Activated B cell treated with CpG ODN at 0.5 μM for 24 hours (primary cell): ENCODE measurements at regions of chr5 and their contacts with region 1.

Region 1: DNA sequence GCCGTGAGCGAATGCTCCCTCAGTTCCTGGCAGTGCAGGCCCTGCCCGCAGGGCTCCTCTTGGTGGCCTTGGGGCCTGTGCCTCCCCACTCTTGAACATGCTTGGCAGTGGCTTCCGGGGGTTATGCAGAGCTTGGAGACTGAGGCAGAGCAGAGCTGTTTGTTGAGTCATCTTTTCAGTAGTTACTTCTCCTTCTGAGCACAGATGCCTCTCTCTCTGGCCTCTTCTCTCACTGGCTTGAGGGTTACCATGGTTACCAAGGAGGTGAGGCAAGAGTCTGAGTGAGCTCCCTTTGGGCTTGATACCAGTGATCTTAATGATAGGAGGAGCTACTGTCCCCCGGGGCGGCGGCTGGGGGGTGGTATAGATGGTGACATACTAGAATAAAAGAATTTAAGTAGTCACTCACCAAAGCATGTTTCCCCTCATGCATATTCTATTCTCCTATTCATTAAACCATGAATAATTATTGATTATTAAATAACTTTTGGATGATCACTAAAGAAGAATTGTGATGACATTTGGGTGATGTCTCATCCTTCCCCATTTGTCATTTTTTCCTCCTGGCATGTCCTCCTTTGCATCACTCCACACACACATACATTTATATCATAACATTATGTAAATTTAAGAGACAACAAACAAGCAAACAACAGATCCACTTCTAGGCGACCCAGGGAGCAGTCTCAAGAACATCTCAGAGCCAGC is 111.1 kb downstream of the ARHGAP26 start:
- DNase-seq: no peak
- ATAC-seq: peak; percentile 85
- H3K4me3 Mint-ChIP-seq: no peak overlapping the region
- H3K27ac Mint-ChIP-seq: no peak overlapping the region
- H3K4me1 Mint-ChIP-seq: peaks cover 10% of the 10 kb centered on the region
- H3K27me3 Mint-ChIP-seq: no peaks in the 10 kb centered on the region
- CTCF ChIP-seq: no peak

Region 2: DNA sequence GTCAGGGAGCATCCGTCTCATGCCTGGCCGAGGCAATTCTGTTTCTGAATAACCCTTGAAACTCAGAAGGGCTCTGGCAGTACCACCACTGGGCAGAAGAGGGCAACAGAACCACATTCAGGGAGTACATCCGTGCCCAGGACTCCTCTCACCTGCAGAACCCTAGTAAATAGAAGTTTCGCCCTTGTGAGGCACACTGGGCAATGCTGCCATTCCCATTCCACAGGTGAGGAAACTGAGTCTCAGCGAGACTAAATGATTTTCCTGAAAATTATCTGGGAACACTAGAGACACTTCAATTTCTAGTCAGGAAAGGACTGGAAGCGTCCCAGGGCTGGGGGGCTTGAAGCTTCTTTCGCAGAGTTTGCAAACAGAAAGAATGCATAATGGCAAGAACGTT is 270.1 kb before region 1 on chr5:
- CTCF ChIA-PET with region 1: interaction called, 3 read pairs
- POLR2A ChIA-PET with region 1: no interaction called
- intact Hi-C with region 1: loop called (anchors 2 kb)
- DNase-seq: peak; percentile 29
- ATAC-seq: peak; percentile 77
- H3K4me3 Mint-ChIP-seq: no peak overlapping the region
- H3K27ac Mint-ChIP-seq: no peak overlapping the region
- H3K4me1 Mint-ChIP-seq: peaks cover 2% of the 10 kb centered on the region
- H3K27me3 Mint-ChIP-seq: peaks cover 19% of the 10 kb centered on the region
- CTCF ChIP-seq: no peak

Region 3: DNA sequence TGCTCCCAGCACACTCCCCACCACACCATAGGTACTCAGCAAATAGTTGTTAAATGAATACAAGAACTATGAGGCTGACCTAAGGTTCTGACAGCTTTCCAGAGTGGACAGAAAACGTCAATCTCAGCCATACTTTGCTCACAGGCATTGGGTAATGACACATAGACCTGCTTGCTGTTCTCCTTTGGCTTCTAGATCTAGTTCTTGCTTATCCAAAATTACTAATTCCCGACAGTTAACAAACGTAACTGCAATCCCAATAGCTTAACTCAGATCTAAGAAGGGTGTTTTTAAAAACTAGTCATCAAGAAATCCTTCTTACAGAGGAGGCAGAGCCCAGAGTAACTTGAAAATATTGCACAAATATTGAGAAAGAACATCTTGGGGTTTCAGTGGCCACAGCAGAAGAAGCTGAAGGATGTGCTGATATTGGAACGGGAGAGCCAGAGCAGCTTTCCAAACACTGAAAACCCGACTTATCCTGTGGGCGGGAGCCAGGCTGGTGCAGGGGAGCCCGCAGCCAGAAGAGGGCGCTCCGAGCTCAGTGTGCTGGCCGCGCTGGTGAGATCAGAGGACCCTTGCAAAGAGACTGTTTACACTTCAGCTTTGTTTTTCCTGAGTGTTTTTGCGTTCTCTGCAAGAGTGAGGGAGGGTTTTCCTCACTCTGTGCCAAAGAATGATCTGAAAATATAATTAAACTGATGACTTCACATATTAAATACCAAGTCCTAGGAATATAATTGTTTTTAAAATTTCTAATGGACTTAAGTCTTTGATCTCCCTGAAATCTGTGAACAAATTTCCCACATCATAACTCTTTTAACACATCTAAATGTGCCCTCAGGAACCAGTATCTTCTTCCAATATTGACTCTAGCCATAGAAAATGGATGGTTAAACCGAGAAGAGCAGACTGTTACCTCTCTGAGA is 225.6 kb before region 1 on chr5:
- CTCF ChIA-PET with region 1: interaction called, 23 read pairs
- POLR2A ChIA-PET with region 1: no interaction called
- intact Hi-C with region 1: loop called (anchors 1 kb)
- DNase-seq: peak; percentile 48
- ATAC-seq: peak; percentile 56
- H3K4me3 Mint-ChIP-seq: no peak overlapping the region
- H3K27ac Mint-ChIP-seq: no peak overlapping the region
- H3K4me1 Mint-ChIP-seq: no peaks in the 10 kb centered on the region
- H3K27me3 Mint-ChIP-seq: peaks cover 21% of the 10 kb centered on the region
- CTCF ChIP-seq: peak; percentile 72

Region 4: DNA sequence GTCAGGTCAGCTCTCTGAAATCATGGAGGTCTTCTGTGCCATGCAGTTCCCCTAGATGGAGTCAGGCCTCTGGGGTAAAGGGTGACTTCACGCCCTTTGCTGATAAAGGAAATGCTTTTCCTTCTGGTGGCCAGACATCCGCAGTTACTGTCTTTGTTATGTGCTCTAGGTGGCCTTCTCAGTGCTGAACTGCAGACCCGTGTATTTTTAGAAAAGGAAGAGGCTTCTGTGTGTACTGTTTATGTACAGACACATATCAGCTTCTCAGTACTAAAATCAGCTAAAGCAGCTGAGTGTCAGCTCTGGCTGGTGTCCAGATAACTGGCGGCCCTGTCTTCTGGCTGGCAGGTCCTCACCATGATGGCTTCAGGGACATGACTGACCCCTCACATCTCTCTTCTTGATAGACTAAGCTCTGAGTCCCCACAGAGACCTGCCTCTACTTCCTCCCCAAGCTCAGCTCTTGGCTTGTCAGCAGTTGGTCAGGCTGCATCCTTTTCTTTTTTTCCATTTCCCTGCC is 35.8 kb before region 1 on chr5:
- CTCF ChIA-PET with region 1: no interaction called
- POLR2A ChIA-PET with region 1: no interaction called
- intact Hi-C with region 1: no loop called
- DNase-seq: no peak
- ATAC-seq: peak; percentile 27
- H3K4me3 Mint-ChIP-seq: peak overlapping the region; percentile 24
- H3K27ac Mint-ChIP-seq: peak overlapping the region; percentile 51
- H3K4me1 Mint-ChIP-seq: peaks cover 32% of the 10 kb centered on the region
- H3K27me3 Mint-ChIP-seq: no peaks in the 10 kb centered on the region
- CTCF ChIP-seq: no peak